Lower lobe of right lung (tissue), 2 donors: ENCODE measurements at regions of chr1 and their contacts with region 1.

Region 1: DNA sequence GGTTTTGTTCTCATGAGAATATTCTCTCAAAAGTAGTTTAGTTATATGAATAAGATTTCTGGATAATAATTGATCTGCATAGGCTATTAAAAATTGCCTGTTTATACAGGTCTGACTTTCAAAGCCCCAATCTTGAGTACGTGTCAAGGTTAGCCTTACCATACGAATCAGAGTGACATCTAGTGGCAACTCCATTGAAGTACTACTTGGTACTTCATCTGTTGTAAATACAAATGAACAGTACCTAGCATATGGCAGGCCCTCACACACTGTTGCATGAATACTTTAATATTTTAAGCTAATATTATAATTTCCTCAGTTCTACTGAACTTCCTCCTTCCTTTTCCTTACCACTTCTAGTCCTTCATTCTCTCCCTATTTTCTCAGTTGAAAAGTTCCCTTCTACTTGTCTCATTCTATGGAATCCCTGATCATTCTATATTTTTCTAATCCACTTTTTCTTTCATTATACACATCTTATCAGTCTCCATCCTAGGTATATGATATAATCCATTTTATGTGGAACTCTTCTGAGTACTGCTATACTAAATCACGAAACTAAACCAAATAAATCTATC is 101.2 kb downstream of the AKT3 start:
- DNase-seq: no peak
- ATAC-seq: peak; percentile 90 to 94
- H3K4me3 ChIP-seq: no peak overlapping the region
- H3K27ac ChIP-seq: no peak overlapping the region
- H3K4me1 ChIP-seq: no peaks in the 10 kb centered on the region
- H3K27me3 ChIP-seq: no peaks in the 10 kb centered on the region
- CTCF ChIP-seq: peak; percentile 76

Region 2: GRCh38 chr1:243343970-243344937 is 404.5 kb before region 1 on chr1:
- intact Hi-C with region 1: loop called (anchors 5 kb)
- DNase-seq: no peak
- ATAC-seq: peak; percentile 67 to 69
- H3K4me3 ChIP-seq: no peak overlapping the region
- H3K27ac ChIP-seq: no peak overlapping the region
- H3K4me1 ChIP-seq: no peaks in the 10 kb centered on the region
- H3K27me3 ChIP-seq: no peaks in the 10 kb centered on the region
- CTCF ChIP-seq: peak; percentile 68

Region 3: GRCh38 chr1:243542739-243543415 is 205.9 kb before region 1 on chr1:
- intact Hi-C with region 1: no loop called
- DNase-seq: no peak
- ATAC-seq: no peak
- H3K4me3 ChIP-seq: no peak overlapping the region
- H3K27ac ChIP-seq: no peak overlapping the region
- H3K4me1 ChIP-seq: no peaks in the 10 kb centered on the region
- H3K27me3 ChIP-seq: no peaks in the 10 kb centered on the region
- CTCF ChIP-seq: no peak

Region 4: DNA sequence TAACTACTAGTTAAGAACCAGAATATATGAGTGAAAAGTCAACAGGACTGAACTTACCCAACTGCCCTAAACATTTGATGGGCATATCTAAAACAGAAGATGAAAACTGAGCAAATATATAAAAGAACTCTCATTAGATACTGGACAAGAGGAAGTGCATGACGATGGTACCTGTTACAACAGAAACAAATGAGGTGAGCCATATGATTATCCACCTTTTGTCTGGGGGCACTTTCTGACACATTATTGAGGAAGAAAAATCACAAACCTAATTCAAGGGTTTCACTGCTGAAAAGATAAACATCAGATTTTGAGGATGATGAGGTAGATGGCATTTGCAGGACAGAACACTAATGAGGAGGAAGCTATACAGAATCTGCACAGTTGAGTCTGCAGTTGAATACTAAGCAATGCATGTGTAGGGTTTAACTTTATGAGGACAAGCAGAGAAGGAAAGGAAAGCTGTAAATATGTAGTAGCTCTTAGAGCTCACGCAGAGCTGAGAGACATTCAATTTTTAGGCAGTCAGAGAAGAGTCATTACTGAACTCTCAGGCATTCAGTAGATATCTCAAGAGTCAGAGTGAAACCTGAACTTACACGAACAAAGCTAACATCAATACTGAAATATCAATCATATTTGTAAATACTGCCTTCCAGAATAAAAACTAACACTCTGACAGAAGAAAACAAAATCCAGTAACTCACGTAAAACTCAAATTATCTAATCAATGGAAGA is 160.8 kb before region 1 on chr1:
- intact Hi-C with region 1: no loop called
- DNase-seq: no peak
- ATAC-seq: no peak
- H3K4me3 ChIP-seq: no peak overlapping the region
- H3K27ac ChIP-seq: no peak overlapping the region
- H3K4me1 ChIP-seq: no peaks in the 10 kb centered on the region
- H3K27me3 ChIP-seq: no peaks in the 10 kb centered on the region
- CTCF ChIP-seq: no peak